ENCODE measurements at regions of chr20 and their contacts with region 1.

Region 1: DNA sequence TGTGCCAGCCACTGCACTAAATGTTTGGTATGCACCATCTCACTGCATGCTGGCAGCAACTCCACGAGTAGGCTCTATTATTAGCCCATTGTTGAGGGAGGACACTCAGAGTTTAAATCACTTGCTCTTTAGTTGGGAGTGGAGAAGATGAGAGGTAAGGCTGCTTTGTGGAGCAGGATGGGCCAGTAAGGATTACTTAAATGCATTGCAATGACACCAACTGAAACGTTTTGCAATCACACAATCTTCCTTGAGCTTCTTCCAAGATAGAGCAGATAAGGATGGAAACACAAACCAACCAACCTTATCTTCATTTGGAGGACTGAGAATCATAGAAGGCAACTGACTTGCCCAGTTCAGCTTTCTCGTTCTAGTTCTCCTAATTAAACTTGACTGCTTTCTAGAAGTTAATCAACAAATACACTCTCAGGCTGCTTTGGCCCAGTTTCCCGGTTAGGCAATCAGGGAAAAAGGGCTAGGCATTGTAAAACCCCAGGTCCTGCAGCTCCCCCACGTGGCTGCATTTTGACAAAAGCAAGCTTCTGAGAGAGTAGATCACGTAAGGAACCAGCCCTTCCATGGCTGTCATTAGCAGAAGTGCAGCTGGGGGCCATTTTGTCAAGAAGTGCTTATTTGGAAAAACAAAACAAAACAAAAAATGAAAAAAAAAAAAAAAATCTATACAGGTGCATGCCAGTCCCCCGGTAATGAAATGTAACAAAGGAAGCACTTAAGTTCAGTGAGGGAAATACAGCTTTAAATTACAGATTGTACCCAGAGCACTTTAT is 130.6 kb downstream of the BCAS1 start:
- DNase-seq: peak; percentile 95 to 96
- H3K4me3 ChIP-seq: no peak overlapping the region
- H3K4me3 Mint-ChIP-seq: no peak overlapping the region
- H3K27ac Mint-ChIP-seq: no peak overlapping the region
- H3K4me1 ChIP-seq: peaks cover 30% of the 10 kb centered on the region
- H3K4me1 Mint-ChIP-seq: peaks cover 35% of the 10 kb centered on the region
- H3K27me3 ChIP-seq: no peaks in the 10 kb centered on the region; the same call in 1 of the 2 replicates
- H3K27me3 Mint-ChIP-seq: no peaks in the 10 kb centered on the region
- CTCF ChIP-seq: peak; percentile 93 to 98

Region 2: DNA sequence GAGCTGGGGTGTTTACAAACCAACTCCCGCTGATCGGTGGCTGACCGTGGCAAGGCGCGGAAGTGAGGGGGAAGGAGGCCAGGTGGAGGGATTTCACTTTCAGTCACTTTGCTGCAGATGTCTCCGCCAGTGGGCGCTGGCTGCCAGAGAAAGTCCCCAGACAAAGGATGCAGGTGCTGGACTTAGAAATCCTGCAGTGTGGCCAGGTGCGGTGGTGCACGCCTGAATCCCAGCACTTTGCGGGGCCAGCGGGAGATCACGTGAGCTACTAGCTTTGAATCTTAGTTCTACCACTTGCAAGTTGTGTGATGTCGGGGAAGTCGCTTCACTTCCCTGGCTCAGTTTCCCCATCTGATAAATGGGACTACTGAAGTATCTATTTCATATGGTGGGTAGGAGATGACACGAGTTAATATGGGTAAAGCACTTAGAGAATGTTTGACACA is 526.6 kb before region 1 on chr20:
- CTCF ChIA-PET with region 1: interaction called, 10 read pairs
- POLR2A ChIA-PET with region 1: no interaction called
- intact Hi-C with region 1: loop called (anchors 1 kb)
- DNase-seq: peak; percentile 92 to 93
- H3K4me3 ChIP-seq: no peak overlapping the region
- H3K4me3 Mint-ChIP-seq: peak overlapping the region; percentile 48
- H3K27ac Mint-ChIP-seq: no peak overlapping the region
- H3K4me1 ChIP-seq: no peaks in the 10 kb centered on the region
- H3K4me1 Mint-ChIP-seq: no peaks in the 10 kb centered on the region
- H3K27me3 ChIP-seq: no peaks in the 10 kb centered on the region; the same call in 1 of the 2 replicates
- H3K27me3 Mint-ChIP-seq: no peaks in the 10 kb centered on the region
- CTCF ChIP-seq: peak; percentile 97 to 100

Region 3: DNA sequence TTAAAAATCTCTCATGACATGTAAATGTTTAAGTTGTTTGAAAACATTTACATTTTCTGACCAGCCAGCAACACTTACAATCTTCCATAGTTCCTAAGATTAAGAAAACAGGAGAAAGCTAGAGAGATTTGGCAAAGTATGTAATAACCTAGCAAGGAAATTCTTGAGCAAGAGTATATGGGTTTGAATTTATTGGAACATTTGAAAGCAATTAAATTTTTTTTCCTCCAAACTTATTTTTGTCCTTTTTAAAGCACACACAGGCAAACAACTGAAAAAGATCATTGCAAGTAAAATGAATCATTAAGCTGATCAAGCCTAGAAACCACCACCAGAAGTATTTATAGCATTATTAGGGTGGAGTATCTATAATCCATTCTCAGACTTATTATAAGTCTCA is 326.0 kb before region 1 on chr20:
- CTCF ChIA-PET with region 1: interaction called, 14 read pairs
- POLR2A ChIA-PET with region 1: no interaction called
- intact Hi-C with region 1: no loop called
- DNase-seq: no peak
- H3K4me3 ChIP-seq: no peak overlapping the region
- H3K4me3 Mint-ChIP-seq: no peak overlapping the region
- H3K27ac Mint-ChIP-seq: no peak overlapping the region
- H3K4me1 ChIP-seq: peaks cover 14% of the 10 kb centered on the region
- H3K4me1 Mint-ChIP-seq: peaks cover 25% of the 10 kb centered on the region
- H3K27me3 ChIP-seq: no peaks in the 10 kb centered on the region
- H3K27me3 Mint-ChIP-seq: no peaks in the 10 kb centered on the region
- CTCF ChIP-seq: no peak

Region 4: GRCh38 chr20:53839423-53840176 is 100.2 kb before region 1 on chr20:
- CTCF ChIA-PET with region 1: no interaction called
- POLR2A ChIA-PET with region 1: no interaction called
- intact Hi-C with region 1: no loop called
- DNase-seq: peak; percentile 36 to 62
- H3K4me3 ChIP-seq: no peak overlapping the region
- H3K4me3 Mint-ChIP-seq: no peak overlapping the region
- H3K27ac Mint-ChIP-seq: peak overlapping the region; percentile 52
- H3K4me1 ChIP-seq: peaks cover 34% of the 10 kb centered on the region
- H3K4me1 Mint-ChIP-seq: peaks cover 23% of the 10 kb centered on the region
- H3K27me3 ChIP-seq: no peaks in the 10 kb centered on the region
- H3K27me3 Mint-ChIP-seq: no peaks in the 10 kb centered on the region
- CTCF ChIP-seq: no peak

Region 5: DNA sequence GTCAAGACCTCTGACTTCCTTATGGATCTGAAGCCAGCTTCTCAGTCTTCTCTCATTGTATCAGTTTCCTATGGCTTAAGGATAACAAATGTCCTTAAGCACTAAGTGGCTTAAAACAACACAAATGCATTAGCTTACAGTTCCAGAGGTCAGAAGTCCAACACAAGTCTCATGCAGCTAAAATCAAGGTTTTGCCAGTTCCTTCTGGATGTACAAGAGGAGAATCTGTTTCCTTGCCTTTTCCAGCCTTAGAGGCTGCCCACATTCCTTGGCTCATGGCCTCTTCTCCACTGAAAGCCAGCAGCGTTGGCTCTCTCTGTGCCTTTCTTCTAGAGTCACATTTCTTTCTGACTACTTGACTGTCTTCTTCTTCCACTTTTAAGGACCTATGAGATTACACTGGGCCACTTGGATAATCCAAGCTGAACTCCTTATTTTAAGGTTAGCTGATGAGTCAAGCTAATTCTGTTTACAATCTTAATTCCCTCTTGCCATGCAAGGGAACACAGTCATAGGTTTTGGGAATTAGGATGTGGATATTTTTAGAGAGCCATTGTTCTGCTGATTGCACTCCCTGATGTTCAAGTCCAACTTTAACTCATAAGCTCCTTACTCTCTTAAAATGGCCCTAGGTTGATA is 48.3 kb before region 1 on chr20:
- CTCF ChIA-PET with region 1: no interaction called
- POLR2A ChIA-PET with region 1: no interaction called
- intact Hi-C with region 1: no loop called
- DNase-seq: no peak
- H3K4me3 ChIP-seq: no peak overlapping the region
- H3K4me3 Mint-ChIP-seq: no peak overlapping the region
- H3K27ac Mint-ChIP-seq: no peak overlapping the region
- H3K4me1 ChIP-seq: peaks cover 6% of the 10 kb centered on the region
- H3K4me1 Mint-ChIP-seq: peaks cover 14% of the 10 kb centered on the region
- H3K27me3 ChIP-seq: no peaks in the 10 kb centered on the region
- H3K27me3 Mint-ChIP-seq: no peaks in the 10 kb centered on the region
- CTCF ChIP-seq: no peak

Region 6: GRCh38 chr20:53921443-53921973 is 18.3 kb before region 1 on chr20:
- CTCF ChIA-PET with region 1: interaction called, 38 read pairs
- POLR2A ChIA-PET with region 1: interaction called, 3 read pairs
- intact Hi-C with region 1: loop called (anchors 2 kb)
- DNase-seq: peak in 1 of 2 experiments; percentile 57
- H3K4me3 ChIP-seq: no peak overlapping the region
- H3K4me3 Mint-ChIP-seq: no peak overlapping the region
- H3K27ac Mint-ChIP-seq: peak overlapping the region; percentile 0
- H3K4me1 ChIP-seq: peaks cover 20% of the 10 kb centered on the region
- H3K4me1 Mint-ChIP-seq: peaks cover 21% of the 10 kb centered on the region
- H3K27me3 ChIP-seq: no peaks in the 10 kb centered on the region
- H3K27me3 Mint-ChIP-seq: no peaks in the 10 kb centered on the region
- CTCF ChIP-seq: no peak